ENCODE measurements at regions of chr15 and their contacts with region 1.

Region 1: GRCh38 chr15:67120839-67121643 is 55.6 kb downstream of the SMAD3 start:
- DNase-seq: peak; percentile 84 to 96 (median 87)
- H3K4me3 ChIP-seq: peak overlapping the region in 1 of 2 donors; percentile 45
- H3K4me3 Mint-ChIP-seq: peak overlapping the region; percentile 74 to 87 (median 82)
- H3K27ac ChIP-seq: peak overlapping the region; percentile 80
- H3K27ac Mint-ChIP-seq: peak overlapping the region; percentile 92 to 100 (median 98)
- H3K4me1 ChIP-seq: peaks cover 100% of the 10 kb centered on the region
- H3K4me1 Mint-ChIP-seq: peaks cover 63 to 99% (median 90%) of the 10 kb centered on the region in 4 donors
- H3K27me3 ChIP-seq: no peaks in the 10 kb centered on the region
- H3K27me3 Mint-ChIP-seq: no peaks in the 10 kb centered on the region

Region 2: GRCh38 chr15:67101911-67102598 is 19.0 kb before region 1 on chr15:
- CTCF ChIA-PET with region 1: interaction called, 8 read pairs
- POLR2A ChIA-PET with region 1: interaction called, 167 read pairs
- intact Hi-C with region 1: loop called (anchors 1 kb)
- DNase-seq: peak; percentile 57 to 77 (median 66)
- H3K4me3 ChIP-seq: peak overlapping the region; percentile 12 to 28
- H3K4me3 Mint-ChIP-seq: no peak overlapping the region
- H3K27ac ChIP-seq: peak overlapping the region; percentile 75
- H3K27ac Mint-ChIP-seq: no peak overlapping the region
- H3K4me1 ChIP-seq: peaks cover 99% of the 10 kb centered on the region
- H3K4me1 Mint-ChIP-seq: peaks cover 26 to 55% (median 27%) of the 10 kb centered on the region in 4 donors
- H3K27me3 ChIP-seq: no peaks in the 10 kb centered on the region
- H3K27me3 Mint-ChIP-seq: no peaks in the 10 kb centered on the region

Region 3: DNA sequence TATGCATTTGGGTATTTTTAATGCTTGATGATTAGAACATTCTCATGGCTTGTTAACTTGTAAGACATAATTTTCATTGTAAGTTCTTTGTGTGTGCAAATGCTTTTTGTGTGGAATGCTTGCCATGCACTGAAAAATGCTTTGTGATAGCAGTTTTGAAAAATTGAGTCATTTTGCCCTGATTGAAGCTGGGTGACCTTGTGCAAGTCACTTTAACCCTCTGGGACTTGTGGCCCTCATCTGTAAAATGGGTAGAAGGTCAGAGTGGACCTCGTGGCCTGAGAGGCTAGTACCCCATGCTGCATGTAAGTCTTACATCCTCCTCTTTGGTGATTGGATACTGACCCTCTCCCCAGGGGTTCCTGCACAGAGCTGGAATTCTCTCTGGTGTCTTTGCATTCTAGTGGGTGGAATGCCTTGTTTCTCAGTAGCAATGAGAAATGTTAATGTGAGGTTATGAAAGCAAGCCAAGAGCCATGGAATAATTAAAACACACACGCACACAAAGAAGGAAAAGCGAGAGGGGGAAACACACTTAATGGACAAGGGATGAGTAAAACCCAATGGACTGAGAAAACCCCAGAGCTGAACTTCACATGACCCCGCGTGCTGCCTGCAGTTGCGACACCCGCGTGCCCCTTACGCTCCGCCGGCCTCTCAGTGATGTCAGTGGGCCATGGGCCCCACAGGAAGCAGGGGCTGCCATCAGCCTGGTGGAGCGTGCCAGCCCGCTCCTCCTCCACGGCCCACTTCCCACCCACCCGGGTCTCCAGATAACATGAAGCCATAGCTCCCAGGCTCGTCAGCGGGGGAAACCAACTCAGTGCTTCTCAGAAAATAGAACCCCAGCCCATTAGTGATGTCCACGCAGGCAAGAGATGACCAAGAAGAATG is 11.7 kb before region 1 on chr15:
- CTCF ChIA-PET with region 1: interaction called, 4 read pairs
- POLR2A ChIA-PET with region 1: interaction called, 167 read pairs
- intact Hi-C with region 1: no loop called
- DNase-seq: no peak
- H3K4me3 ChIP-seq: no peak overlapping the region
- H3K4me3 Mint-ChIP-seq: peak overlapping the region in 6 of 8 donors; percentile 12 to 66 (median 32)
- H3K27ac ChIP-seq: no peak overlapping the region
- H3K27ac Mint-ChIP-seq: peak overlapping the region in 5 of 7 donors; percentile 29 to 87 (median 80)
- H3K4me1 ChIP-seq: peaks cover 85% of the 10 kb centered on the region
- H3K4me1 Mint-ChIP-seq: peaks cover 18 to 71% (median 34%) of the 10 kb centered on the region in 4 donors
- H3K27me3 ChIP-seq: no peaks in the 10 kb centered on the region
- H3K27me3 Mint-ChIP-seq: no peaks in the 10 kb centered on the region

Region 4: GRCh38 chr15:67134067-67134838 is 13.2 kb after region 1 on chr15:
- CTCF ChIA-PET with region 1: interaction called, 8 read pairs
- POLR2A ChIA-PET with region 1: interaction called, 21 read pairs
- intact Hi-C with region 1: no loop called
- DNase-seq: peak; percentile 81 to 92 (median 85)
- H3K4me3 ChIP-seq: peak overlapping the region; percentile 48 to 73
- H3K4me3 Mint-ChIP-seq: peak overlapping the region; percentile 86 to 97 (median 90)
- H3K27ac ChIP-seq: peak overlapping the region; percentile 85
- H3K27ac Mint-ChIP-seq: peak overlapping the region; percentile 97 to 100 (median 99)
- H3K4me1 ChIP-seq: peaks cover 99% of the 10 kb centered on the region
- H3K4me1 Mint-ChIP-seq: peaks cover 75 to 98% (median 88%) of the 10 kb centered on the region in 4 donors
- H3K27me3 ChIP-seq: no peaks in the 10 kb centered on the region
- H3K27me3 Mint-ChIP-seq: no peaks in the 10 kb centered on the region

Region 5: DNA sequence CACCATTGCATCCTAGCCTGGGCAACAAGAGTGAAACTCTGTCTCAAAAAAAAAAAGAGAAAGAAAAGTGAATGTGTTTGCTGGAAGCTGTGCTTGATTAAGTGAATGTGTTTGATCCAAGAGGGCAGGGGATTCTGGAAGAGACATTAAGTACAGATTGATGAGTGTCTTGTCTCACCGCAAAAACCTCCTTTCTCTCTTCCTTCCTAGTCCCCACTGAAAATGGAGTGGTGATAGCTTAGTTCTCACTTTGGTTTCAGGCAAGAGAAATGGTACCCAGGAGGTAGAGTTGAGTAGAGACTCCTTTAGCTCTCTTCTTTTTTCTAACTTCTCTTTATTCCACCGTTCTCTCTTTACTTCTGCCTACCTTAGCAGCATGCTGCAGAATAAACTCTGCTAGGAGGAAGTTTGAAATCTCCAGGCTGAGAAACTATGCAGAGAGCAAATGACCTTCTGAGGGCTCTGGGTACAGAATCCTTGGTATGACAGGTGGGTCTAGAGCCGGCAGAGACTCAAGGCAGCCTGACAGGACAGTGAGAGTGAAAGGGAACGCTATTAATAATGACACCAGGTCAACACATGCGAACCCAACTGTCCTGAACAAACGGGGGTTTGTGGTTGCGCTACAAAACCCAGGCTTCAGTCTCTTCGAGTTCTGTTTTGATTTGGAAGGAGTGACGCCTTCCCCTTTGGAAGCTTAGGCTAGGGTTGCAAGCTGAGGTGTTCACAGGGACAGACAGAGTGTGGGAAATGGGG is 19.2 kb after region 1 on chr15:
- CTCF ChIA-PET with region 1: interaction called, 6 read pairs
- POLR2A ChIA-PET with region 1: interaction called, 21 read pairs
- intact Hi-C with region 1: no loop called
- DNase-seq: no peak
- H3K4me3 ChIP-seq: no peak overlapping the region
- H3K4me3 Mint-ChIP-seq: peak overlapping the region in 6 of 8 donors; percentile 5 to 57 (median 33)
- H3K27ac ChIP-seq: no peak overlapping the region
- H3K27ac Mint-ChIP-seq: peak overlapping the region; percentile 30 to 97 (median 73)
- H3K4me1 ChIP-seq: peaks cover 100% of the 10 kb centered on the region
- H3K4me1 Mint-ChIP-seq: peaks cover 65 to 100% (median 86%) of the 10 kb centered on the region in 4 donors
- H3K27me3 ChIP-seq: no peaks in the 10 kb centered on the region
- H3K27me3 Mint-ChIP-seq: no peaks in the 10 kb centered on the region

Region 6: DNA sequence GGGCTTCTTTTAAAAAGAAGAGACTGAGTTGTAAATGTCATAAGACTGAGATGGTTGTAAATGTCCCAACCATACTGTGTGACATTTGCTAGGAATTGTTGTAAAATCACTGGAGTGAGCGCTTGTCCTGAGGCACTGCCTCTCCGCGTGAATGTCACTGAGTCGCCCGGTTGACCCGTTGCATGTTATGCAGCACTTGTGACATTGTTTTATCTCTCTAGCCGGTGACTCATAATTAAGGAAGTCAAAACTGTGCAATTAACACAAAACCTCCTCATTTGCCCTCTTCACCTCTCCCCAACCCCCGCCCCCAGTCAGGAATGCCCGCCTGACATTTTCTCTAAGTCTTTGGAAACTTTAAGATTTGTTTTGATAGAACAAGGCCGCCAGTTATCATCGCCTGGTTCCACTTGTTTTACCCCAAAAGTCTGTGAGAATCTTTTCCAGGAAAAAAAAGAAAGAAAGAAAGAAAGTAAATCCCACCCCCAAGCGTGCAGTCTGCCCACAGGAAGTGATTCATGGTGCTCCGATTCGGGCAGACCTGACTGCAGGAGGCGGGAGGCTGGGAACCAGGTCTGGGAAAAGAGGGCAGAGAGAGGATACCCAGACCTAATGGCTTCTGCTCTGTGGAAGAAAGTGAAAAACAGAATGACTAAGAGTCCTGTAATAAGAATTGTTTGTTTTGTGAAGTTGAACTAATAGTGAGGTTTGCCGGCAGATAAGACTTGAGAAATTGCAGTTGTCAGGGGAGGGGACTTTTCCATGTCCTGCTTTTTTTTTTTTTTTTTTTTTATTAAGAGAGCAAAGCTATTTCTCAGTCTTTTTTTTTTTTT is 29.2 kb after region 1 on chr15:
- CTCF ChIA-PET with region 1: no interaction called
- POLR2A ChIA-PET with region 1: interaction called, 13 read pairs
- intact Hi-C with region 1: no loop called
- DNase-seq: peak in 1 of 5 donors; percentile 68
- H3K4me3 ChIP-seq: peak overlapping the region; percentile 2 to 23
- H3K4me3 Mint-ChIP-seq: peak overlapping the region; percentile 47 to 90 (median 73)
- H3K27ac ChIP-seq: peak overlapping the region; percentile 27
- H3K27ac Mint-ChIP-seq: peak overlapping the region; percentile 43 to 95 (median 77)
- H3K4me1 ChIP-seq: peaks cover 68% of the 10 kb centered on the region
- H3K4me1 Mint-ChIP-seq: peaks cover 63 to 79% (median 72%) of the 10 kb centered on the region in 4 donors
- H3K27me3 ChIP-seq: no peaks in the 10 kb centered on the region
- H3K27me3 Mint-ChIP-seq: no peaks in the 10 kb centered on the region

Measured in CD4-positive, alpha-beta memory T cell (primary cell).